ENCODE measurements at regions of chr11 and their contacts with region 1.

Region 1: DNA sequence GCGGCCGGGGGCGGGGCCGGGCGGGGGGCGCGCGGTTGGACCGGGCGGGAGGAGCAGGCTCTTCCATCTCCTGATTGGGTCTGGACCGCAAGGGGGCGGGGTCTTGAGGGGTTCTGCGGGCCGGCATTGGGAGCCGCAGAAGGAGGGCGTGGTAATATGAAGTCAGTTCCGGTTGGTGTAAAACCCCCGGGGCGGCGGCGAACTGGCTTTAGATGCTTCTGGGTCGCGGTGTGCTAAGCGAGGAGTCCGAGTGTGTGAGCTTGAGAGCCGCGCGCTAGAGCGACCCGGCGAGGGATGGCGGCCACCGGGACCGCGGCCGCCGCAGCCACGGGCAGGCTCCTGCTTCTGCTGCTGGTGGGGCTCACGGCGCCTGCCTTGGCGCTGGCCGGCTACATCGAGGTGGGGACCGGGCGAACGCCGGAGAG is at the start of gene APLP2:
- DNase-seq: peak; percentile 100
- H3K4me3 ChIP-seq: peak within 1 kb of the TSS; percentile 58 to 91 (median 76)
- H3K27ac ChIP-seq: peak within 1 kb of the TSS; percentile 90 to 96 (median 93)
- H3K4me1 ChIP-seq: peaks cover 26 to 30% of the 10 kb centered on the region in 2 donors
- H3K27me3 ChIP-seq: no peaks in the 10 kb centered on the region
- CTCF ChIP-seq: peak in 1 of 6 experiments; percentile 2
- POLR2A ChIP-seq: peak; percentile 69 to 97
- total RNA-seq, gene APLP2: 782 to 1,078 (median 902) TPM

Region 2: DNA sequence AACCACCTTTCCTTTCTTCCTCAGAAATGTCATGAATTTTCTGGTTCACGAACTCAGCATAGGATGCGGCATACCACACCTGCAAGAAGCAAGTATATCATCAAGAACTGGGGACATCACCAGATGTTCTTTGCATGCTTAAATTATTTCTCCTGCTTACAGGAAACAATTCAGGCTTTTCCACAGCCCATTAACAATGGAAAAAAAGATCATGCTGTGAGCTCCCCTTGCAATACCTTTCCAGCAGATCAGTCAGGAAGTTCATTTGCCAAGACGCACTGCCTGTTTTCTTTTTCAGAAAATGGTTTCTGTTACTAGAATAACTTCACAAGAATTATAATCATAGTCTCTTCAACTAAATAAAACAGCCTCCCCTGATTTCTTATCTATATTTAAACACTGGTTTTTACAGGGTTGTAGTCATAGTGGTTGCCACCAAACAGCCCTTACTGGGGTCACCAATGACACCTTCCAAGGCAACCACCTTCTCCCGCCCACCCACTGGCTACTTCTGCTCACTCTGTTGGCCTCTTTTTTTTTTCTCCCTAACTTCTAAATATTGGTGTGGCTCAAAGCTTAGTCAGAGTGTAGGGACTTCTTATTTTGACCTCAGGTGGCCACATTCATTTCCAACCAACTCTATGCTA is 132.0 kb before region 1 on chr11:
- intact Hi-C with region 1: no loop called
- DNase-seq: no peak
- H3K4me3 ChIP-seq: no peak overlapping the region
- H3K27ac ChIP-seq: peak overlapping the region; percentile 24 to 34 (median 31)
- H3K4me1 ChIP-seq: peaks cover 0 to 14% of the 10 kb centered on the region in 2 donors
- H3K27me3 ChIP-seq: no peaks in the 10 kb centered on the region
- CTCF ChIP-seq: no peak
- POLR2A ChIP-seq: no peak

Region 3: DNA sequence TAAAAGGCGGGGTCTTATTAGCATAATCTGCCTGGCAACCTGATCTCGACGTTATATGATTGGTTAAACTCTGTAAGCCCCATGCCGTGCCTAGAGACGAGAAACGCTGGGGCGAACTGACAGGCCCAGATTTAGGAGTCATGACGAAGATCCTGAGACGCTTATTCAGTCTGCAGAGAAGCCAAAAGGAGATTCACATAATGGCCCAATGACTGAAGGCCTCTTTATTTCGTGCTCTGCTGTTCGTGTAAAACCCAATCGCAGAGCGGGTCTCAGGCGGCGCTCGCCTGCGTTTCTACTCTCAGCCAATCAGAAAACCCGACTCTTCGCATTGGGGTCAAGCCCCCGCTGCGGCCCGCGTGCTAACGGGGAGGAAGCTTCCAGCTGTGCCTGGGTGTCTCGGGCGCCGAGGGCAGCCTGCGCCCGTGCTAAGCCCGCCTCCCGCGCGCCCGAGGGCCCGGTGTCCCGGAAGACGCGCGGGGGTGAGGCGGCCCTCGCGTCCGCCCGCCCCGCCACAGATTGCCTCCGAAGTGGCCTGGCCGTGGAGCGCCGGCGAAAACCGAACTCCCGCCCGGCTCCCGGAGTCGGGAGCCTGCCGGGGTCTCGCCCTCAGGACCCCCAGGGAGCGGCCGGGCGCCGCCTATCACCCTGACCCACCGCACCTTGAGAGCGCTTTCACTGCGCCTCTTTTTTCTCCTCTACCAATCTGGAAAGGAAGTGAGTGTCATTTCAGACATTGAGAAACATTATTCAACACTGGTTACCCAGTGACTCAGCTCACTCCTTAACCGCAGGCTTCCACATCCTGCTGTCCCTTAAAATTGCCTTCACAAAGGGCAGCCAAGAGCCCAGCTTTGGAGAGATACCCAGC is 66.6 kb before region 1 on chr11:
- intact Hi-C with region 1: loop called (anchors 5 kb)
- DNase-seq: peak; percentile 94 to 95
- H3K4me3 ChIP-seq: peak overlapping the region; percentile 44 to 76 (median 70)
- H3K27ac ChIP-seq: peak overlapping the region; percentile 99 to 100 (median 99)
- H3K4me1 ChIP-seq: peaks cover 13 to 21% of the 10 kb centered on the region in 2 donors
- H3K27me3 ChIP-seq: no peaks in the 10 kb centered on the region
- CTCF ChIP-seq: no peak
- POLR2A ChIP-seq: peak in 1 of 2 donors; percentile 94

Region 4: GRCh38 chr11:130109386-130109785 is 39.7 kb after region 1 on chr11:
- intact Hi-C with region 1: no loop called
- DNase-seq: no peak
- H3K4me3 ChIP-seq: no peak overlapping the region
- H3K27ac ChIP-seq: peak overlapping the region in 1 of 3 donors; percentile 11
- H3K4me1 ChIP-seq: peaks cover 10 to 13% of the 10 kb centered on the region in 2 donors
- H3K27me3 ChIP-seq: no peaks in the 10 kb centered on the region
- CTCF ChIP-seq: no peak
- POLR2A ChIP-seq: no peak

Region 5: DNA sequence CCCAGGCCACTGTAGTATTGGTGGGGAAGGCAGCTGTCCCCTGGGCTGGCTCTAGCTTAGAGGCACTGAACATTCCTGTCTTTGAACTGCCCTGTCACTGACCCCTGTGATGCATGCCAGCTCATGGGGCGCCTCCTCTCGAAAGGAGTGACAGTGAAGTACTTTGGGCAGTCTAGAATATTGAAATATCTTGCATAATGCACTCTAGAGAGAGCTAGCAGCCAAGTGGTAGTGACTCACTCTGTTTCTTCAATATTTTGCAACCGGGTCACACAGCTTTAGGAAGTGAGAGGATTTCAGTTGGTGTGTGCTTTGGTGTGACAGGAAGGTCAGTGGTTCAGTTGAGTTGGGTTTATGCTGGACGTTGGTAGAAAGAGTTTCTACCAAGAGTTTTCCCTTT is 54.4 kb after region 1 on chr11:
- intact Hi-C with region 1: loop called (anchors 10 kb)
- DNase-seq: peak; percentile 91 to 94
- H3K4me3 ChIP-seq: no peak overlapping the region
- H3K27ac ChIP-seq: peak overlapping the region; percentile 64 to 84 (median 77)
- H3K4me1 ChIP-seq: peaks cover 27 to 46% of the 10 kb centered on the region in 2 donors
- H3K27me3 ChIP-seq: no peaks in the 10 kb centered on the region
- CTCF ChIP-seq: no peak
- POLR2A ChIP-seq: no peak

Region 6: DNA sequence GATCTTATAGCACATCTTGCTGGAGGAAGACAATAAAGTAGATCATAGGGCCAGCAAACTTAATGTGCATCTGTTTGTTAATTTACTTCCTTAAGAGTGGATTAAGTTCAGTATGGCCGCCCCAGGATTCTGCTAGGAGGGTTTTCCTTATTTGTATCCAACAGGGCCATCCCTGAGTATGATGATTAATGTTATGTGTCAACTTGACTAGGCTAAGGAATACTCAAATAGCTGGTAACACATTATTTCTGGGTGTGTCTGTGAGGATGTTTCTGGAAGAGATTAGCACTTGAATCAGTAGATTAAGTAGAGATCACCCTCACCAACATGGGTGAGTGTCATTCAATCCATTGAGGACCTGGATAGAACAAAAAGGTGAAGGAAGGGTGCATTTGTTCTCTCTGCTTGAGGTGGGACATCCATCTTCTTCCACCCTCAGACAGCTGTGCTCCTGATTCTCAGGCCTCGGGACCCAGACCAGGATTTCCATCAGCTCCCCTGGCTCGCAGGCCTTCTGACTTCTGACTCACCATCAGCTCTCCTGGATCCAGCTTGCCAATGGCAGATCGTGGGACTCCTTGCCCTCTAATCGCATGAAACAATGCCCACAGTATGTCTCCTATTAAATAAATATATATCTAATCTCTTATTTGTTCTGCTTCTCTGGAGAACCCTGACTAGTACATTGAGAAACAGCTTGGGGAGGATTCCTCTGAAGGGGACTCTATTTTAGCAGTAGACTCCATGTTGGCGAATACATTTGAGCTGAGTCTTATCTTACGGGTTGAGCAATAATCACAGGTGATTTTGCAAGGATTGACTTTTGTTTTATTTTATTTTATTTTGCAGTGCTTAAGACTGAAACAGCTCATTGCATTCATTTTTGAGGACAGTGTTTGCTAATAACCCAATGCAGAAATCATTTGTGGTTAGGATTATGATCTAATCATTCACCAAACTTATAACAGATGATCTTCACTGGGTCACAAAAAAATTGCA is 254.1 kb after region 1 on chr11:
- intact Hi-C with region 1: no loop called
- DNase-seq: no peak
- H3K4me3 ChIP-seq: no peak overlapping the region
- H3K27ac ChIP-seq: no peak overlapping the region
- H3K4me1 ChIP-seq: no peaks in the 10 kb centered on the region
- H3K27me3 ChIP-seq: no peaks in the 10 kb centered on the region
- CTCF ChIP-seq: no peak
- POLR2A ChIP-seq: no peak